KBM-7 (cell line): ENCODE measurements at regions of chr2 and their contacts with region 1.

Region 1: DNA sequence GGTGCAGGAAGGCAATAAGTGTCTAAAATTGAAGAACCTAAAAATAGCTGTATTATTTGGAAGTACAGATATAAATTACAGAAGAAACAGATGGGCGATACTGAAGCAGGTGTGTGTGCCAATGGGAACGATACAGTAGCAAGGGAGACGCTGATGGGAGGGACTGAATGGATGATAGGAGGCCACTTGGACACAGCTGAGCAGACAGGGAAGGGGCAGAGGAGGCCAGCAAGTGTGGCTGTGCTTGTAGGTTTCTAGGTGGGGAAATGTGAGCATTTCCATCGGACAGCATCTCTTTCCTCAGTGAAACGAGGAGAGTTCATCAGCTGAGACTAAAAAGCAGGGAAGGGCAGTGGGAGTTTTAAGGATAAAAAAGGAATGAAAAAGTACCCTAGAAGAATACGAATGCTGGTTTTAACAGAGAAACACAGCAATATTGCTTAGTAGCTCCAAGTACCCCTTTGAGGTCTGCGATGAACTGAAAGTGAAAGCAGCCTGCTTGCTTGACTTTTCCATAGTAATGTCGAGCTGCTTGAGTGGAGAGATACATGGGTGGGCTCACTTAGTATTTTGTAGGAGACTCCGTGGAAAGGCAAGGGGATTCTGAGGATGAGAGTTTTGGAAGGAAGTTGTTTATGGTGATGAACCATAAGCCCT is 91.7 kb upstream of the EPC2 start:
- DNase-seq: peak; percentile 26

Region 2: DNA sequence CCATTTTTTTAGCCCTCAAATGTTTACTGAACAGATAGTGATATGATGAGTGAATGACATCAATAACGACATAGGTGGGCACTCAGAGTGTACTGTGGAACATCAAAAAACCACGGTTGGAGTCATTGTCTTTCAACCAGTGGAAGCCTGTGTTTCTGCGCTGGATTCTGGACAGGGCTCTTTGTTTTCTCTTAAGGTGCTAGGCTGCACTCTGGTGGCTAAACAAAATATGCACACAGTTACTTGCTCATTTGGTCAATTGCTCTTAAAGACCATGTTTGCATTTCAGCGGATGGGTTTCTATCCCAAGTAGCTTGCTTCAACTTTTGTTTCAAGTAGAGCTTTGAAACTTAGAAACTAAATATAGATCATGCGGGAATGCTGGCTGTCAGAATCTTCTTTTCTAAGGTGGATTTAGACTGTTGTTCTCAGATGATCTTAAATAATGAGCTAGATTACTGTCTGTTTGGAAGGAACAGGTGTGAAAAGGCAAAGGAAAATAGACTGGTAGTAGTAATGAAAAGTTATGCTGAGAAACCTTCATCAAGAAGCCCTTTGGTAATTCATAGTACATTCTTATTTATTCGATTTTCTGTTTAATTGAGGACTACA is 437.2 kb after region 1 on chr2:
- in situ Hi-C with region 1: loop called (anchors 25 kb)
- DNase-seq: peak; percentile 87